HepG2 (cell line): ENCODE measurements at regions of chr10 and their contacts with region 1.

Region 1: DNA sequence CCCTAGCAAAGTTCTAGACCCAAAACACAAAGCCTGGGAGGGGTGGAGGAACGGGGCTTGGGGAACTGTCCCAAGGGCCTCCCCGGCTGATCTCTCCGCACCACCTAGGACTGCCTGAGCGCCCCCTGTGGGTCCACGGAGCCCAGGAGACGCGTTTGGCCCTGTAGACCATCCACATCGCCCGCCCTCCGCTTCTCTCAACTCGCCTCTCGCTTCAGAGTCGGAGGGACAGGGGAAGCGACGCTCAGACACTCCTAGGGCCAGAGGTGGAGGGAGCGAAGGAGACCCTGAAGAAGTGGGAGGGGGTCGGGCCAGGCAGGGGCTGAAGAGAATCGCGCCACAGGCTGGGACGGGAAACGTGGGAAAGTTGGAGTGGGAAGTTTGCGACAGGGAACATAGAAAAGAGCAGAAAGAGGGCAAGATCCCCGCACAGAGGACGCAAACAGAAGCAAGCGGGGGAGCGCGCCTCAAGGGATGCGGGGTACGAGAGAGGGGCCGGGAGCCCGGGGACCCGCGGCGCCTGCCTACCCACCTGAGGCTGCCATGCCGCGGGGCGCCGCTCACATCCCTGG is 378 bp downstream of the PIK3AP1 start:
- DNase-seq: peak; percentile 16
- ATAC-seq: peak; percentile 90
- H3K4me3 ChIP-seq: peak overlapping the region; percentile 60 to 78 (median 61)
- H3K27ac ChIP-seq: no peak overlapping the region
- H3K4me1 ChIP-seq: peaks cover 38% of the 10 kb centered on the region
- H3K27me3 ChIP-seq: peaks cover 0 to 14% of the 10 kb centered on the region in 2 experiments; a peak in 3 of 5 replicates
- CTCF ChIP-seq: peak; percentile 93
- EP300 ChIP-seq: no peak
- POLR2A ChIP-seq: no peak
- RAD21 ChIP-seq: peak; percentile 43; the same call in 1 of the 2 replicates

Region 2: GRCh38 chr10:96642973-96643372 is 77.0 kb before region 1 on chr10:
- CTCF ChIA-PET with region 1: interaction called, 26 read pairs
- POLR2A ChIA-PET with region 1: interaction called, 4 read pairs
- in situ Hi-C with region 1: loop called (anchors 5 kb)
- intact Hi-C with region 1: loop called (anchors 1 kb)
- DNase-seq: peak; percentile 54
- ATAC-seq: peak; percentile 84
- H3K4me3 ChIP-seq: no peak overlapping the region
- H3K27ac ChIP-seq: no peak overlapping the region
- H3K4me1 ChIP-seq: peaks cover 27% of the 10 kb centered on the region
- H3K27me3 ChIP-seq: no peaks in the 10 kb centered on the region; a peak in 1 of 5 replicates
- CTCF ChIP-seq: peak; percentile 81
- EP300 ChIP-seq: no peak
- POLR2A ChIP-seq: no peak
- RAD21 ChIP-seq: peak; percentile 72

Region 3: GRCh38 chr10:96673318-96674099 is 46.4 kb before region 1 on chr10:
- CTCF ChIA-PET with region 1: no interaction called
- POLR2A ChIA-PET with region 1: interaction called, 7 read pairs
- in situ Hi-C with region 1: no loop called
- intact Hi-C with region 1: loop called (anchors 5 kb)
- DNase-seq: peak; percentile 80
- ATAC-seq: peak; percentile 71
- H3K4me3 ChIP-seq: peak overlapping the region; percentile 45 to 52 (median 51)
- H3K27ac ChIP-seq: peak overlapping the region; percentile 89
- H3K4me1 ChIP-seq: peaks cover 81% of the 10 kb centered on the region
- H3K27me3 ChIP-seq: no peaks in the 10 kb centered on the region
- CTCF ChIP-seq: no peak
- EP300 ChIP-seq: peak; percentile 38 to 73; a peak in 2 of 4 replicates
- POLR2A ChIP-seq: 0 out of 4 replicates have a peak, but pooled peaks of 1 of the 2 experiments have one; percentile 15
- RAD21 ChIP-seq: no peak

Region 4: GRCh38 chr10:96743988-96744585 is 24.2 kb after region 1 on chr10:
- CTCF ChIA-PET with region 1: no interaction called
- POLR2A ChIA-PET with region 1: no interaction called
- in situ Hi-C with region 1: no loop called
- intact Hi-C with region 1: loop called (anchors 2 kb)
- DNase-seq: peak; percentile 44
- ATAC-seq: peak; percentile 74
- H3K4me3 ChIP-seq: no peak overlapping the region
- H3K27ac ChIP-seq: no peak overlapping the region
- H3K4me1 ChIP-seq: peaks cover 17% of the 10 kb centered on the region
- H3K27me3 ChIP-seq: peaks cover 0 to 3% of the 10 kb centered on the region in 2 experiments; a peak in 1 of 5 replicates
- CTCF ChIP-seq: peak; percentile 70
- EP300 ChIP-seq: no peak
- POLR2A ChIP-seq: no peak
- RAD21 ChIP-seq: 0 out of 2 replicates have a peak, but pooled peaks have one; percentile 32